AG04449 (cell line): ENCODE measurements at regions of chr22 and their contacts with region 1.

Region 1: GRCh38 chr22:24951942-24952836 is at the start of gene KIAA1671:
- DNase-seq: no peak
- H3K4me3 ChIP-seq: peak within 1 kb of the TSS; percentile 62
- CTCF ChIP-seq: peak; percentile 81

Region 2: DNA sequence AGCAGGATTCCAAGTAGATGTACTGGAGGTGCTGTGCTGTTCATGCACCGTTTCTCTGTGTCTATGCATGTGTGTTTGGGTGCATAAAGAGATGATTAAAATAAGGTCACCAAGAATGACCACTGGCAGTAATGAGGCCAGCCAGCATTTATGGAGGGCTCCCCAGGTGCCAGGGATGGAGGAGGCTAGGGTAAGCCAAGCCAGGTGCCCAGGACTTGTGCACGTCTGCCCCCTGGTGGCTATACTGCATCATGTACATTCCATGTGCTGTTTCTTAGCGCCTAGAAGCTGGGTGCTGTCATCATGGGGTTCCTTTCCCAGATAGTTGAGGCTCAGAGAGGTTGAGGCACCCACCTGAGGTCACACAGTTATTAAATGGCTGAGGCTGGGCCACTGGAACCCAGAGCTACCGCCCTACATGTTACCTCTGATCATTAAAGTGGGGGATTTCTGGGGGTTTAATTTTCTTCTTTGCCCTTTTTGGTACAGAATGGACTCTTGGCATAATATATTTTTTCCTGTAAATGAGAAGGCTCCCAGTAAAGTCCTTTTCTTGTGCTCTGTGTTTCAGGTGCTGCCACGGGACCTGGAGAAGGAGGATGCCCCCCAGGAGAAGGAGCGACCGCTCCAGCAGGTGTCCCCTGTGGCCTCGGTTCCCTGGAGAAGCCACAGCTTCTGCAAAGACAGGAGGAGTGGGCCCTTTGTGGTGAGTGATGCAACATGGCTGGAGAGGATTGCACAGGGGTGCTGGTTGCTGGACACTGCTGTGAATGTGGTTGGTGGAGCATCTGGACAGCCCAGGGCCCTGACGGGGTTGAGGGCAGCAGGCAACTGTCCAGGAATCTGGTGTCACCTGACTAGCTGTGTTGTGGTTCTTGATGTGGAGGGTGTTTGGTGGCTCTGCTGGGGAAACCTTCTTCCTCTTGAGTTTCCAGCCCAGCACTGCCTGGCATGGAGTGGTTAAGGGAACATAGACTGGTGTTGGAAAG is 96.8 kb after region 1 on chr22:
- CTCF ChIA-PET with region 1: interaction called, 16 read pairs
- POLR2A ChIA-PET with region 1: no interaction called
- DNase-seq: no peak
- H3K4me3 ChIP-seq: no peak overlapping the region
- CTCF ChIP-seq: peak; percentile 74

Region 3: GRCh38 chr22:25235547-25236290 is 283.5 kb after region 1 on chr22:
- CTCF ChIA-PET with region 1: no interaction called
- POLR2A ChIA-PET with region 1: no interaction called
- DNase-seq: no peak
- H3K4me3 ChIP-seq: no peak overlapping the region
- CTCF ChIP-seq: peak; percentile 67